Tibial artery (tissue), 4 donors: ENCODE measurements at regions of chr11 and their contacts with region 1.

Region 1: DNA sequence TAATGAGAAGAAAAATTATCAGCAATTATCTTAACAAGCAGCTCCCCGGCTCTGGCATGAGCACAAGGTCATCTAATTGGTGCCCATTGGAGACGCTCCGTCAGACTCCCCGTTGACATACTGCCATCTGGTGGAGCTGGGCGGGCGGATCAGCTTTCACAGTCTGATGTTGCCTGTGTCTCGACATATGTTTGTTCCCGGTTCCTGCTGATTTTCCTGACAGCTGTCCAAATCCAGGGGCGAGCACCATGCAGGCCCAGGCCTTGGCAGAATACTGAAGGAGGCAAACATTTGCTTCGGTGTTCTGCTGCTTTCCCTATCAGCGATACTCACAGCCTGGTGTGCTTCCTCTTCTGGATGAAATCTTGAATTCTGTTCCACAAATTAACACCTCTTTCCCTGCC is 43.8 kb upstream of the BARX2 start:
- DNase-seq: peak; percentile 82
- H3K4me3 ChIP-seq: no peak overlapping the region
- H3K27ac ChIP-seq: no peak overlapping the region
- H3K4me1 ChIP-seq: no peaks in the 10 kb centered on the region
- H3K27me3 ChIP-seq: no peaks in the 10 kb centered on the region
- CTCF ChIP-seq: peak; percentile 79 to 80

Region 2: DNA sequence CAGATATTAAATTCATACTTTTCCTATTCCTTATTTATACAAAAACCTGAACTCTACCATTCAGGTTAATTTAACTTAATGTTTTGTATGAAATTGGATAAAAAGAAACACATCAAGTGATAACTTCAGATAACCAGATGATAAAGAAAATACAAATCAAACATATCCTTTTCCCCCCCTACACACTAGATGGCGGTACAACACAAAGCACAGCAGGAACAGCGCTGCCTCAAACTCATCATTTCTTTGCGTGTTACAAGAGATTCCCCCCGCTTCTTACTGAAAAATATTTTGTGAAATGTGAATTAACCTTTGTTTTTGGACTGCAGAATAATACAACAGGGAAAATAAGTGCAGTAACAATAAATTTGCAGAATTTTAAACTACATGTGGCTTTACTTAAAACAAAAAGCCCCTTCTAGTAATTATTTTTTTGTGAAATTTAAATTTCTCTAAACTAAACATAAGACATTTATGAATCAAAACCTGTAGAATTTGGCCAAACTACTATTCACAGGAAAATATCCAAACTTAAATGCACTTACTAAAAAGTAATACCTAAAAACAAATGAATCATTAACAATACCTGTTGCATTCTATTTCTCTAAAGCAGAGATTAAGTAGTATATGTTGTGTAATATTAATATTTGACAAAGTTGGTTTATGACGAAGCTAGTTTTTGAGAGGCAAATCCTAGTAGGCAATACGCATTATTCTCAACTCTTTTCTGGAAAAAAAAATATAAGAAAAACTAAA is 214.1 kb before region 1 on chr11:
- intact Hi-C with region 1: loop called (anchors 5 kb)
- DNase-seq: peak in 1 of 2 donors; percentile 25
- H3K4me3 ChIP-seq: no peak overlapping the region
- H3K27ac ChIP-seq: no peak overlapping the region
- H3K4me1 ChIP-seq: no peaks in the 10 kb centered on the region
- H3K27me3 ChIP-seq: no peaks in the 10 kb centered on the region
- CTCF ChIP-seq: peak; percentile 81 to 85

Region 3: GRCh38 chr11:129230006-129230405 is 101.9 kb before region 1 on chr11:
- intact Hi-C with region 1: loop called (anchors 10 kb)
- DNase-seq: no peak
- H3K4me3 ChIP-seq: no peak overlapping the region
- H3K27ac ChIP-seq: no peak overlapping the region
- H3K4me1 ChIP-seq: peaks cover 0 to 3% (median 0%) of the 10 kb centered on the region in 4 donors
- H3K27me3 ChIP-seq: no peaks in the 10 kb centered on the region
- CTCF ChIP-seq: no peak

Region 4: GRCh38 chr11:129375751-129376657 is 44.1 kb after region 1 on chr11 and contains the start of gene BARX2:
- intact Hi-C with region 1: no loop called
- DNase-seq: no peak
- H3K4me3 ChIP-seq: peak within 1 kb of the TSS; percentile 9 to 17
- H3K27ac ChIP-seq: no peak within 1 kb of the TSS
- H3K4me1 ChIP-seq: peaks cover 0 to 40% (median 34%) of the 10 kb centered on the region in 4 donors
- H3K27me3 ChIP-seq: peaks cover 3 to 73% of the 10 kb centered on the region in 2 donors
- CTCF ChIP-seq: no peak

Region 5: GRCh38 chr11:129950101-129951091 is 618.5 kb after region 1 on chr11:
- intact Hi-C with region 1: no loop called
- DNase-seq: peak in 1 of 2 donors; percentile 65
- H3K4me3 ChIP-seq: no peak overlapping the region
- H3K27ac ChIP-seq: no peak overlapping the region
- H3K4me1 ChIP-seq: no peaks in the 10 kb centered on the region
- H3K27me3 ChIP-seq: no peaks in the 10 kb centered on the region
- CTCF ChIP-seq: no peak